Activated CD4-positive, alpha-beta T cell treated with anti-CD3 and anti-CD28 coated beads, Interleukin-2, amount 10 ng/mL, durations not matched to agents 24 days and 14 days (primary cell): ENCODE measurements at regions of chr12 and their contacts with region 1.

Region 1: GRCh38 chr12:68040450-68041075 is 51.3 kb downstream of the IFNG-AS1 start:
- DNase-seq: peak; percentile 89
- H3K4me3 Mint-ChIP-seq: no peak overlapping the region
- H3K27ac Mint-ChIP-seq: peak overlapping the region; percentile 78
- H3K4me1 Mint-ChIP-seq: peaks cover 42% of the 10 kb centered on the region
- H3K27me3 Mint-ChIP-seq: no peaks in the 10 kb centered on the region

Region 2: DNA sequence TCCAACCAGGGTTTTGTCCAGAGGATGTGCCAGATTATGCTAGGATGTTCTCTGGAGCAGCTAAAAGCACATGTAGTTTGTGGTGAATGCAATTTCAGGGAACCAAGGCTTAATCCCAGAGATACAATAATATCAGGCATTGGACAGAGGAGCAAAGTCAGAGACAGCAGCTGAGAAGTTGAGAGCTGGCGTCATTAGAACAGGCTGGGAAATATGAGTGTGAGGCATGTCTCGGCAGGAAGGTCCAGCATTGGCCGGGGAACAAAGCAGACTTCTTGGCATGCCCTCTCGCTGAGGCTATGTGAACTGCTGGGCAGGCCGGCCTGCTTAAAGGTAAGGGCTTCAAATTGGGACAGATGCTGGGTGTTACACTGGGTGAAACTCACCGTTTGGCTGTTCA is 646.0 kb before region 1 on chr12:
- intact Hi-C with region 1: no loop called
- DNase-seq: no peak
- H3K4me3 Mint-ChIP-seq: no peak overlapping the region
- H3K27ac Mint-ChIP-seq: no peak overlapping the region
- H3K4me1 Mint-ChIP-seq: no peaks in the 10 kb centered on the region
- H3K27me3 Mint-ChIP-seq: peaks cover 4% of the 10 kb centered on the region

Region 3: DNA sequence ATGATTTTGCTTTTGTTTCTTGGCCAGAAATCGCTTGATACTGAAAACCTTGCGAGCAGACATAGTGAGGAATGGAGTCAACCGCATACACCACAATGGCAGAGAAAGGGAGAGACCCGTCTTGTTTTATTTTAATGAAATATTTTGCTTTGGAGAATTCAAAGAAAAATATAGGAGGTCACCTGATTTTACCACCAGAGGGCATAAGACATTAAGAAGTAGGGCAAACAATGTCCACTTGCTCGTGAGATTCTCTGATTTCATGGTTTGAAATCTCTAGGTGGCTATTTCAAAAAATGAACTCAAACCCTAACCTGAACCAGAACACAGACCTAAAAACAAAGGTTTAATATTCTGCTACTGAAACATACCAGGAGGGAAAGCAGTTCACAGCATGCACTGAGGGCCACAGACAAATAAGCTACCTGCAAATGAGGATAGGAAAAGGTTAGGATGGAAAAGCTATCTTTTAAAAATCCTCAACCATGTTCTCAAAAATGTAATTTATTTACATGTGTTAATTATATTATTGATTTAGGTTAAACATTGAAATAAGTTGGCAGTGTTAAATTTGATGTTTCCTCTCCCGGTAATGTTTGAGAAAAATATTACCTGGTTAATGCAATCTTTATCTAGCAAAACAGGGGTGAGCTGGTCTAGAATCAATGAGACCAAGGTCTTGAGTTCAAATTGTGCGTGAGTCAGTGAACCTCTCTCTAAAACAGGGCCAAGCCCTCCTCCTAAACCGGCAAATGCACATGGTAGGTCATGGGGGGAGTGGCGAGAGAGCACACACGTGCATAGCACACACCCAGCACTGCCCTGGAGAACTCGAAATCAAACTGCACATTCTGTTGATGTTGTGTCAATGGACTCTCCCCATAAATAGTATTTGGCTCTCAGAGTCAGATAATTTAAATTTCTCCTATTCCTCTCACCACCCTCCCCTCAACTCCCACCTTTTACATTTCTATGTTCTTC is 38.8 kb before region 1 on chr12:
- intact Hi-C with region 1: loop called (anchors 5 kb)
- DNase-seq: no peak
- H3K4me3 Mint-ChIP-seq: no peak overlapping the region
- H3K27ac Mint-ChIP-seq: no peak overlapping the region
- H3K4me1 Mint-ChIP-seq: peaks cover 7% of the 10 kb centered on the region
- H3K27me3 Mint-ChIP-seq: no peaks in the 10 kb centered on the region

Region 4: GRCh38 chr12:68080577-68080976 is 40.0 kb after region 1 on chr12:
- intact Hi-C with region 1: loop called (anchors 2 kb)
- DNase-seq: peak; percentile 79
- H3K4me3 Mint-ChIP-seq: peak overlapping the region; percentile 59
- H3K27ac Mint-ChIP-seq: peak overlapping the region; percentile 84
- H3K4me1 Mint-ChIP-seq: peaks cover 34% of the 10 kb centered on the region
- H3K27me3 Mint-ChIP-seq: no peaks in the 10 kb centered on the region

Region 5: DNA sequence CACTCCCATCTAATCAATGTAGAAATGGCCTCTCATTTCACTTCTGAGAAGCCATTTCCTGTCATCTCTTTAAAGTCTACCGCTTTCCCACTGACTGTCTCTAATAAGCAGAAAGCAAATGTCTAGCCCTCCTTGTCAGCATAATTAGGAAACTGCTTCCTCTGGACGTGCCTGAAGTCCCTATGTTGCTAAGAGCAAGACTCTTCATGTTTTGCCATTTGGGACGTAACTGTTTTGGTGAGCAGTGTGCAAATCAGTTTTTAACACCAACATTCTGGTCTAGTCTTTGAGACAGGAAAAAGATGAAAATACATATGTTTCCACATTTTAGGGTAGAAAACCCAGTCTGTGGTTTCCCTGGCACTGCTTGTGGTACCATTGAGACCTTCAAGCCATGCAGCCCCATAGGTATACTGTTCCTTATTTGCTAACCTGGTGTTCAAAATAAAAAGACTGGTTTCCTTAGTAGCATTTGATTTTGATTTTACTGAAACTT is 96.8 kb after region 1 on chr12:
- intact Hi-C with region 1: loop called (anchors 1 kb)
- DNase-seq: peak; percentile 65
- H3K4me3 Mint-ChIP-seq: peak overlapping the region; percentile 53
- H3K27ac Mint-ChIP-seq: peak overlapping the region; percentile 89
- H3K4me1 Mint-ChIP-seq: peaks cover 65% of the 10 kb centered on the region
- H3K27me3 Mint-ChIP-seq: no peaks in the 10 kb centered on the region

Region 6: DNA sequence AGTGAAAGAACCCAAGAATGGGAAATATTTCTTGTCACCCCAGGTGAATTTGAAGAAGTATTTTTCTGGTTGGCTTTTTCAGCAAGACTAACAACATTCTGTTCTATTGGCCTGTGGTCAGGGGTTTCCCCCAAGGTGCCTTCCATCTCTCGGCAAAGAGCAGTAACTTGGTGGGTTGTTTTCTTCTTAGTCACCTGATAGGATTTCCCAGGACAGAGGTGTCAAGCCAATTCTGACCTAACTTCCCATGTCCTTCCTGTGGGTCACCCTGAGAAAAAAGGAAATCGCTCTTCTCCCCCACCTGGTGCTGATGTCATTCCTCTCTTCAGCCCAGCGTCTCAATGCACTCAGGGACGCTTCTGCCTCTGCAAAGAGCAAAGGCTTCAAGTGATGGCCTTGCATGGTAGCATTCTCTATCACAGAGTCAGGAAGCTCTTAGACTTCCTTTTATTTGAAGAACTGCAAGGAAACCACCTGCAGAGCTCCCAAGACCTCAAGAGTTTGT is 135.0 kb after region 1 on chr12:
- intact Hi-C with region 1: loop called (anchors 5 kb)
- DNase-seq: peak; percentile 92
- H3K4me3 Mint-ChIP-seq: peak overlapping the region; percentile 68
- H3K27ac Mint-ChIP-seq: peak overlapping the region; percentile 85
- H3K4me1 Mint-ChIP-seq: peaks cover 53% of the 10 kb centered on the region
- H3K27me3 Mint-ChIP-seq: no peaks in the 10 kb centered on the region

Region 7: DNA sequence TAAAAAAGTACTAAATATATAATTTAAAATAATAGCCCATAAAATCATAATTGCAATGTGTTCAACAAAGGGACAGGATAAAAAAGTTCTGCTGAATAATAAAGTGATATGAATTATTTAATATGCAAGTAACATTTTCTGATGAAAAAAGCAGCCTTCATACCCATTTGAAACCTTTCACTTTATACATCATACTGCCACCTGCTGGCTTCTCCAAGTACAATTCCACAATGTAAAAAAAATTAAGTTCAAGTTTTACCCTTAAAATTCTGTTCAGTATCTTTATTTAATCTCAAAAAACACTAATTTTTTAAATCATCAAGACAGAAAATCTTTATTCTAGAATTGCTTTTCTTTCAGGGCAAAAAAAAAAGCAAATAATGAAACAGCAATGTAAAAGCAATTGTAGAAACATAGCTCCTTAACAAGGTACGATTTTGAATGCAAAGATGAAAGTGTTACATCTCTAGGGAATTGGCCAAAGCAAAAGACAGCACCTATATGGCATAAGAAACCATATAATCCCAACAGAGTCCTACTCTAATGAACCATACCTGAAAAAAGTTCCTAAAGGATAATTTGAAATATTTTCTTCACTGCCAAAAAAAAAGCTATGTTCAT is 276.6 kb after region 1 on chr12:
- intact Hi-C with region 1: loop called (anchors 1 kb)
- DNase-seq: peak; percentile 84
- H3K4me3 Mint-ChIP-seq: no peak overlapping the region
- H3K27ac Mint-ChIP-seq: no peak overlapping the region
- H3K4me1 Mint-ChIP-seq: peaks cover 4% of the 10 kb centered on the region
- H3K27me3 Mint-ChIP-seq: no peaks in the 10 kb centered on the region